CD8-positive, alpha-beta T cell (primary cell): ENCODE measurements at regions of chr3 and their contacts with region 1.

Region 1: GRCh38 chr3:23945903-23946751 is 1.0 kb downstream of the NR1D2 start:
- DNase-seq: peak; percentile 96 to 99 (median 98)
- ATAC-seq: peak; percentile 76
- H3K4me3 ChIP-seq: peak overlapping the region; percentile 95 to 97
- H3K4me3 Mint-ChIP-seq: peak overlapping the region; percentile 86
- H3K27ac ChIP-seq: peak overlapping the region; percentile 89 to 93
- H3K27ac Mint-ChIP-seq: peak overlapping the region; percentile 86
- H3K4me1 ChIP-seq: peaks cover 42% of the 10 kb centered on the region
- H3K4me1 Mint-ChIP-seq: peaks cover 46% of the 10 kb centered on the region
- H3K27me3 ChIP-seq: no peaks in the 10 kb centered on the region
- H3K27me3 Mint-ChIP-seq: no peaks in the 10 kb centered on the region
- CTCF ChIP-seq: no peak

Region 2: GRCh38 chr3:22713936-22714335 is 1232.2 kb before region 1 on chr3:
- CTCF ChIA-PET with region 1: no interaction called
- POLR2A ChIA-PET with region 1: no interaction called
- intact Hi-C with region 1: no loop called
- DNase-seq: peak in 1 of 9 experiments; percentile 7
- ATAC-seq: no peak
- H3K4me3 ChIP-seq: no peak overlapping the region
- H3K4me3 Mint-ChIP-seq: no peak overlapping the region
- H3K27ac ChIP-seq: no peak overlapping the region
- H3K27ac Mint-ChIP-seq: no peak overlapping the region
- H3K4me1 ChIP-seq: no peaks in the 10 kb centered on the region
- H3K4me1 Mint-ChIP-seq: no peaks in the 10 kb centered on the region
- H3K27me3 ChIP-seq: no peaks in the 10 kb centered on the region
- H3K27me3 Mint-ChIP-seq: no peaks in the 10 kb centered on the region
- CTCF ChIP-seq: no peak

Region 3: GRCh38 chr3:23202921-23203707 is 743.0 kb before region 1 on chr3 and contains the start of gene UBE2E2:
- CTCF ChIA-PET with region 1: no interaction called
- POLR2A ChIA-PET with region 1: no interaction called
- intact Hi-C with region 1: loop called (anchors 5 kb)
- DNase-seq: peak; percentile 26 to 82 (median 48)
- ATAC-seq: peak; percentile 66
- H3K4me3 ChIP-seq: peak within 1 kb of the TSS; percentile 73 to 74
- H3K4me3 Mint-ChIP-seq: peak within 1 kb of the TSS; percentile 94
- H3K27ac ChIP-seq: peak within 1 kb of the TSS in 1 of 2 experiments; percentile 51
- H3K27ac Mint-ChIP-seq: peak within 1 kb of the TSS; percentile 89
- H3K4me1 ChIP-seq: peaks cover 6% of the 10 kb centered on the region
- H3K4me1 Mint-ChIP-seq: peaks cover 28% of the 10 kb centered on the region
- H3K27me3 ChIP-seq: peaks cover 0 to 10% of the 10 kb centered on the region in 2 experiments
- H3K27me3 Mint-ChIP-seq: peaks cover 12% of the 10 kb centered on the region
- CTCF ChIP-seq: no peak
- total RNA-seq, gene UBE2E2: 9.5 to 14.2 TPM

Region 4: GRCh38 chr3:23701716-23702559 is 244.2 kb before region 1 on chr3:
- CTCF ChIA-PET with region 1: no interaction called
- POLR2A ChIA-PET with region 1: no interaction called
- intact Hi-C with region 1: no loop called
- DNase-seq: no peak
- ATAC-seq: no peak
- H3K4me3 ChIP-seq: no peak overlapping the region
- H3K4me3 Mint-ChIP-seq: no peak overlapping the region
- H3K27ac ChIP-seq: no peak overlapping the region
- H3K27ac Mint-ChIP-seq: no peak overlapping the region
- H3K4me1 ChIP-seq: no peaks in the 10 kb centered on the region
- H3K4me1 Mint-ChIP-seq: no peaks in the 10 kb centered on the region
- H3K27me3 ChIP-seq: no peaks in the 10 kb centered on the region
- H3K27me3 Mint-ChIP-seq: no peaks in the 10 kb centered on the region
- CTCF ChIP-seq: no peak

Region 5: DNA sequence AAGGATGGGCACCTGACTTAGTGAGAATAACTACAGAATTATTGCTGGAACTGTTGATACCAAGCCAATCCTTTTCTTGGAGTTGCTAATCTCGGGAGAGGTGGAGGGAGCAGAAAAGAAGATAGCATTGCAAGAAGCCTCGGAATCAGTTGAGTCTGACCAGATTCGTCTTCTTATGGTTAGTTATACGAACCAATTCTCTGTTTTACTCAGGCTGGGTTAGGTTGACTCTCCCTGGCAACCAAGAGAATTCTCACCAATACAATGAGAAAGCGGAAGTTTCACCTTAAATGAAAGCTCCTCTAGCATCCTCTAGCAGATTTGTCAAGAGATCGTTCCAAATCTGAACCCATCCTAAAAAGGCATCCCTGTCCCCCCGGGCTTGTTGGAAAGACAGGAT is 183.9 kb before region 1 on chr3:
- CTCF ChIA-PET with region 1: no interaction called
- POLR2A ChIA-PET with region 1: no interaction called
- intact Hi-C with region 1: no loop called
- DNase-seq: peak in 2 of 9 experiments; percentile 17 to 46
- ATAC-seq: no peak
- H3K4me3 ChIP-seq: no peak overlapping the region
- H3K4me3 Mint-ChIP-seq: peak overlapping the region; percentile 65
- H3K27ac ChIP-seq: peak overlapping the region in 1 of 2 experiments; percentile 50
- H3K27ac Mint-ChIP-seq: no peak overlapping the region
- H3K4me1 ChIP-seq: peaks cover 7% of the 10 kb centered on the region
- H3K4me1 Mint-ChIP-seq: peaks cover 32% of the 10 kb centered on the region
- H3K27me3 ChIP-seq: no peaks in the 10 kb centered on the region
- H3K27me3 Mint-ChIP-seq: no peaks in the 10 kb centered on the region
- CTCF ChIP-seq: no peak

Region 6: GRCh38 chr3:23805633-23806533 is 140.2 kb before region 1 on chr3 and contains the start of gene UBE2E1:
- CTCF ChIA-PET with region 1: no interaction called
- POLR2A ChIA-PET with region 1: no interaction called
- intact Hi-C with region 1: loop called (anchors 2 to 10 kb)
- DNase-seq: peak; percentile 53 to 92 (median 72)
- ATAC-seq: peak; percentile 82
- H3K4me3 ChIP-seq: peak within 1 kb of the TSS; percentile 59 to 63
- H3K4me3 Mint-ChIP-seq: peak within 1 kb of the TSS; percentile 97
- H3K27ac ChIP-seq: peak within 1 kb of the TSS; percentile 28 to 33
- H3K27ac Mint-ChIP-seq: peak within 1 kb of the TSS; percentile 98
- H3K4me1 ChIP-seq: peaks cover 27% of the 10 kb centered on the region
- H3K4me1 Mint-ChIP-seq: peaks cover 47% of the 10 kb centered on the region
- H3K27me3 ChIP-seq: no peaks in the 10 kb centered on the region
- H3K27me3 Mint-ChIP-seq: no peaks in the 10 kb centered on the region
- CTCF ChIP-seq: no peak
- total RNA-seq, gene UBE2E1: 39.8 to 40.6 TPM

Region 7: GRCh38 chr3:23916886-23917678 is 29.0 kb before region 1 on chr3 and contains the starts of genes NKIRAS1 and RPL15:
- CTCF ChIA-PET with region 1: interaction called, 5 read pairs
- POLR2A ChIA-PET with region 1: interaction called, 51 read pairs
- intact Hi-C with region 1: loop called (anchors 1 kb)
- DNase-seq: peak; percentile 94 to 98 (median 97)
- ATAC-seq: peak; percentile 93
- H3K4me3 ChIP-seq: peak within 1 kb of the TSS; percentile 89 to 95
- H3K4me3 Mint-ChIP-seq: peak within 1 kb of the TSS; percentile 99
- H3K27ac ChIP-seq: peak within 1 kb of the TSS; percentile 88
- H3K27ac Mint-ChIP-seq: peak within 1 kb of the TSS; percentile 97
- H3K4me1 ChIP-seq: peaks cover 38% of the 10 kb centered on the region
- H3K4me1 Mint-ChIP-seq: peaks cover 55% of the 10 kb centered on the region
- H3K27me3 ChIP-seq: no peaks in the 10 kb centered on the region
- H3K27me3 Mint-ChIP-seq: no peaks in the 10 kb centered on the region
- CTCF ChIP-seq: peak; percentile 22
- total RNA-seq, gene NKIRAS1: 4.5 to 6.2 TPM
- total RNA-seq, gene RPL15: 2,460 to 2,470 TPM

Region 8: GRCh38 chr3:25789596-25790556 is 1843.7 kb after region 1 on chr3 and contains the start of gene OXSM:
- CTCF ChIA-PET with region 1: no interaction called
- POLR2A ChIA-PET with region 1: no interaction called
- intact Hi-C with region 1: loop called in 1 of 2 experiments (anchors 10 kb)
- DNase-seq: peak; percentile 75 to 98 (median 89)
- ATAC-seq: peak; percentile 93
- H3K4me3 ChIP-seq: peak within 1 kb of the TSS; percentile 64 to 65
- H3K4me3 Mint-ChIP-seq: peak within 1 kb of the TSS; percentile 97
- H3K27ac ChIP-seq: peak within 1 kb of the TSS; percentile 85 to 87
- H3K27ac Mint-ChIP-seq: peak within 1 kb of the TSS; percentile 98
- H3K4me1 ChIP-seq: peaks cover 18% of the 10 kb centered on the region
- H3K4me1 Mint-ChIP-seq: peaks cover 54% of the 10 kb centered on the region
- H3K27me3 ChIP-seq: no peaks in the 10 kb centered on the region
- H3K27me3 Mint-ChIP-seq: no peaks in the 10 kb centered on the region
- CTCF ChIP-seq: no peak
- total RNA-seq, gene OXSM: 4.0 to 5.9 TPM